B cell (primary cell): ENCODE measurements at regions of chr22 and their contacts with region 1.

Region 1: DNA sequence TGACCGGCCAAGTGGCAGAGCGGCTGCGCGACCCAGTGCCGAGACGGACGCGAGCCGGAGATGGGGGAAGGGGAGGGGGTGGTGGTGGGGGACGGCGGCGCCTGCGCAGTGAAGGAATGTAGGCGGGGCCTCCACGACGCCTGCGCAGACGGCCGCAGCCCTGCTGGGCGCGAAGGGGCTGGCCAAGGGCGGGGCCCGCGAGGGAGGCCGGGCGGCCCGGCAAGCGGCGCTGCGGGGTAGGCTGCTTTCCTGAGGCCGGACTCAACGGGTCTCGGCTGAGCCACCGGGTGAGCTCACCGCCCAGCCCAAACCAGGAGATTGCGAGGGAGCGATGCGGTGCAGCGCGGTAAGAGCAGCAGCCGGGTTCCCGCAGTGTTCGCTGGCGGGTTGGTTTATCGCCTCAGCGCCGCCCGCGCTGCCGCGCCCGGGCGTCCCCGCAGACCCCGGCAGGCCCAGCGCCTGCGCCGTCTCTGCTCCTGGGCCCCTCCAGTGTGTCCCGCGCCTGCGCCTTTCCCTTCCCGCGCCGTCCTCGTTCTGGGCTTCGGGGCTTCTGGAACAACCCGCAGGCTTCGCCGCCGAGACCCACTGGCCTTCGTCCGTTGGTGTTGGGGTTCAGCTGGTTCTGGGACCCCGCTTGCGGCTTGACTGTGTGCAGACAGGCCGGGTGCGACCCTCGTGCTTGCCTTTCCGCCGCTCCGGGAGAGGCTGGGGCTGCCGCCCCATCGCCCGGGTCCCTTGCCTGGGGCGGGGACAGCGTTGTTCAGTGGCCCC is at the start of gene SPECC1L:
- DNase-seq: peak; percentile 96
- ATAC-seq: peak; percentile 93
- H3K4me3 ChIP-seq: peak within 1 kb of the TSS; percentile 75 to 92 (median 78)
- H3K4me3 Mint-ChIP-seq: peak within 1 kb of the TSS; percentile 88
- H3K27ac ChIP-seq: peak within 1 kb of the TSS; percentile 76 to 84
- H3K27ac Mint-ChIP-seq: peak within 1 kb of the TSS; percentile 91
- H3K4me1 ChIP-seq: peaks cover 21 to 39% of the 10 kb centered on the region in 2 donors
- H3K4me1 Mint-ChIP-seq: peaks cover 39% of the 10 kb centered on the region
- H3K27me3 ChIP-seq: no peaks in the 10 kb centered on the region
- H3K27me3 Mint-ChIP-seq: no peaks in the 10 kb centered on the region
- CTCF ChIP-seq: no peak
- total RNA-seq, gene SPECC1L: 81.4 and 85.3 TPM in 2 replicates

Region 2: GRCh38 chr22:23922651-23923320 is 348.0 kb before region 1 on chr22:
- CTCF ChIA-PET with region 1: no interaction called
- POLR2A ChIA-PET with region 1: no interaction called
- intact Hi-C with region 1: no loop called
- DNase-seq: peak; percentile 1
- ATAC-seq: no peak
- H3K4me3 ChIP-seq: no peak overlapping the region
- H3K4me3 Mint-ChIP-seq: no peak overlapping the region
- H3K27ac ChIP-seq: no peak overlapping the region
- H3K27ac Mint-ChIP-seq: no peak overlapping the region
- H3K4me1 ChIP-seq: no peaks in the 10 kb centered on the region
- H3K4me1 Mint-ChIP-seq: no peaks in the 10 kb centered on the region
- H3K27me3 ChIP-seq: no peaks in the 10 kb centered on the region
- H3K27me3 Mint-ChIP-seq: no peaks in the 10 kb centered on the region
- CTCF ChIP-seq: no peak

Region 3: DNA sequence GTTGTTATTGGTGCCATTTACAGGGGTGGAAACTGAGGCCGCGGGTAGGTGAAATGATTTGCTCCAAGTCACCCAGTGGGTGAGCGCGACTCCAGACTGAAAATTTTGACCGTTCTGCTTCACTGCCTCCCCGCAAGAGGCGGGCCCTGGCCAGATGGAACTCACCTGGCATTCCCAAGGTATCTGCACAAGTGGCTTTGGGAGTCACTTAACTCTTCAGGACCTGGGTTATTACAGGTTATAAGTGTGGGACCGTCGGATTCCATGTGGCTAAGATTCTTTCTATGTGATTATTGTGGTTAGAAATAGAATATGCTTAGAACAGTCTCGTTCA is 259.1 kb before region 1 on chr22:
- CTCF ChIA-PET with region 1: no interaction called
- POLR2A ChIA-PET with region 1: no interaction called
- intact Hi-C with region 1: loop called (anchors 2 kb)
- DNase-seq: no peak
- ATAC-seq: no peak
- H3K4me3 ChIP-seq: peak overlapping the region; percentile 77 to 88 (median 86)
- H3K4me3 Mint-ChIP-seq: peak overlapping the region; percentile 95
- H3K27ac ChIP-seq: peak overlapping the region in 1 of 2 donors; percentile 80
- H3K27ac Mint-ChIP-seq: peak overlapping the region; percentile 95
- H3K4me1 ChIP-seq: peaks cover 7 to 18% of the 10 kb centered on the region in 2 donors
- H3K4me1 Mint-ChIP-seq: peaks cover 28% of the 10 kb centered on the region
- H3K27me3 ChIP-seq: no peaks in the 10 kb centered on the region
- H3K27me3 Mint-ChIP-seq: no peaks in the 10 kb centered on the region
- CTCF ChIP-seq: no peak

Region 4: DNA sequence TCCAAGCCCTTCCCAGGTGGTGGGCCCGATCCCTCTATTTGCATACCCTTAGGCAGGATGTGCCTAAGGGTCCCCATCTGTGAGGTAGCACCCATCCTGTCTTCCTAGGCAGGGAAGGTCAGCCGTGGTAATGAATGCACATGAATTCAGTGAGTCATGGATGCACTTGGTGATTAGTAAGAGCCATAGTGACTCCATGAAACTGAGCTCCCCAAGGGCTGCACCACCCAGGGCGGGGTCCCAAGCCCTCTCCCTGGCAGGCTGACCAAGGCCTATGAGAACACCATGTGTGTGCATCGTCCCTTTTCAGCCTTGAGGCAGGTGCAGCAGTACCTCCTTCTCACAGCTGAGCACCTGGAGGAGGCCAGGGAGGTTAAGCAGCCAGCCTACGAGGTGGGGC is 105.2 kb before region 1 on chr22:
- CTCF ChIA-PET with region 1: no interaction called
- POLR2A ChIA-PET with region 1: interaction called, 12 read pairs
- intact Hi-C with region 1: no loop called
- DNase-seq: no peak
- ATAC-seq: no peak
- H3K4me3 ChIP-seq: no peak overlapping the region
- H3K4me3 Mint-ChIP-seq: no peak overlapping the region
- H3K27ac ChIP-seq: no peak overlapping the region
- H3K27ac Mint-ChIP-seq: no peak overlapping the region
- H3K4me1 ChIP-seq: peaks cover 0 to 8% of the 10 kb centered on the region in 2 donors
- H3K4me1 Mint-ChIP-seq: peaks cover 9% of the 10 kb centered on the region
- H3K27me3 ChIP-seq: no peaks in the 10 kb centered on the region
- H3K27me3 Mint-ChIP-seq: no peaks in the 10 kb centered on the region
- CTCF ChIP-seq: no peak